ENCODE measurements at regions of chr17 and their contacts with region 1.

Region 1: GRCh38 chr17:50094753-50095619 is at the start of gene PDK2:
- DNase-seq: peak; percentile 97
- ATAC-seq: peak; percentile 93
- H3K4me3 Mint-ChIP-seq: peak within 1 kb of the TSS; percentile 84
- H3K27ac Mint-ChIP-seq: peak within 1 kb of the TSS; percentile 91
- H3K4me1 Mint-ChIP-seq: peaks cover 19% of the 10 kb centered on the region
- H3K27me3 Mint-ChIP-seq: no peaks in the 10 kb centered on the region
- total RNA-seq, gene PDK2: 9.8 to 16.2 TPM

Region 2: GRCh38 chr17:49414622-49415350 is 680.2 kb before region 1 on chr17 and contains the start of gene PHB1:
- CTCF ChIA-PET with region 1: no interaction called
- POLR2A ChIA-PET with region 1: no interaction called
- intact Hi-C with region 1: loop called in 1 of 2 experiments (anchors 1 kb)
- DNase-seq: peak; percentile 98
- ATAC-seq: peak; percentile 100
- H3K4me3 Mint-ChIP-seq: peak within 1 kb of the TSS; percentile 100
- H3K27ac Mint-ChIP-seq: peak within 1 kb of the TSS; percentile 95
- H3K4me1 Mint-ChIP-seq: peaks cover 32% of the 10 kb centered on the region
- H3K27me3 Mint-ChIP-seq: no peaks in the 10 kb centered on the region
- total RNA-seq, gene PHB1: 346 to 350 TPM

Region 3: DNA sequence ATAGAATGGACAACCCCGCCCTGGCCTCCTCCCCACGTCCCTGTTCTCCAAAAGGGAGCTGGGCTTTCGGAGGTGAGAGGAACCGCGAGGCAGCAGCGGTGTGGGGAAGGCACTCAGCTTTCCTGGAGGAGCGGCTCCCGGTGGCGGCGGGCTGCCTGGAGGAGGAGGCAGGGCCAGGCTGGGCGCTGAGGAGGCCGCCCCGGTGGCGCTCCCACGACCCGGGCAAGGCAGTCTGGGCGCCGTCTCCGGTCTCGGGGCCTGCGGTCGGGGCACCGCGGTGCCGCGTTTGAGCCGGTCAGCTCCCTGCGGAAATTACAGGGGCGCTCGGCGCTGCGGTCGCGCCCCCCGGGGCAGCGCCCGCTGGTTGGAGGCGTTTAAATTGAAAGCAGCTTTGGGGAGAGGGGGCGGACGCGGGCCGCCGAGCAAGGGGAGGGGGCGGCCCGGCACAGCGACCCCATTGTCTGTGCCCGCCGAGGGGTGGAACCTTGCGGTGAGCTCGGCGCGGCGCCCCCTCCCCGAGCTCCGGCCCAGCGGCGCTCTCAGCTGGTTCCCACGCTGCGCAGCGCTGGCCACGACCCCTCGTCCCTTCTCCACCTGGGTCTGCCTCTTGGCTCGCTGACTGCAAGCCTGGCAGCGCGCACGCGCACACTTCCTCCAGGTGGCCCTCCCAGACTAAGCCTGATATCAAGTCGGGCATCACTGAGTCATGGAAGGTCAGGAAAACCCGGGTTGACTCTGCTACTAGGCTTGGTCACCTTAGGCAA is 184.7 kb before region 1 on chr17:
- CTCF ChIA-PET with region 1: interaction called, 11 read pairs
- POLR2A ChIA-PET with region 1: no interaction called
- intact Hi-C with region 1: no loop called
- DNase-seq: peak; percentile 59
- ATAC-seq: peak; percentile 79
- H3K4me3 Mint-ChIP-seq: peak overlapping the region; percentile 30
- H3K27ac Mint-ChIP-seq: no peak overlapping the region
- H3K4me1 Mint-ChIP-seq: peaks cover 6% of the 10 kb centered on the region
- H3K27me3 Mint-ChIP-seq: peaks cover 66% of the 10 kb centered on the region

Region 4: GRCh38 chr17:50067996-50068395 is 27.0 kb before region 1 on chr17:
- CTCF ChIA-PET with region 1: interaction called, 11 read pairs
- POLR2A ChIA-PET with region 1: no interaction called
- intact Hi-C with region 1: no loop called
- DNase-seq: no peak
- ATAC-seq: no peak
- H3K4me3 Mint-ChIP-seq: no peak overlapping the region
- H3K27ac Mint-ChIP-seq: no peak overlapping the region
- H3K4me1 Mint-ChIP-seq: no peaks in the 10 kb centered on the region
- H3K27me3 Mint-ChIP-seq: no peaks in the 10 kb centered on the region

Region 5: DNA sequence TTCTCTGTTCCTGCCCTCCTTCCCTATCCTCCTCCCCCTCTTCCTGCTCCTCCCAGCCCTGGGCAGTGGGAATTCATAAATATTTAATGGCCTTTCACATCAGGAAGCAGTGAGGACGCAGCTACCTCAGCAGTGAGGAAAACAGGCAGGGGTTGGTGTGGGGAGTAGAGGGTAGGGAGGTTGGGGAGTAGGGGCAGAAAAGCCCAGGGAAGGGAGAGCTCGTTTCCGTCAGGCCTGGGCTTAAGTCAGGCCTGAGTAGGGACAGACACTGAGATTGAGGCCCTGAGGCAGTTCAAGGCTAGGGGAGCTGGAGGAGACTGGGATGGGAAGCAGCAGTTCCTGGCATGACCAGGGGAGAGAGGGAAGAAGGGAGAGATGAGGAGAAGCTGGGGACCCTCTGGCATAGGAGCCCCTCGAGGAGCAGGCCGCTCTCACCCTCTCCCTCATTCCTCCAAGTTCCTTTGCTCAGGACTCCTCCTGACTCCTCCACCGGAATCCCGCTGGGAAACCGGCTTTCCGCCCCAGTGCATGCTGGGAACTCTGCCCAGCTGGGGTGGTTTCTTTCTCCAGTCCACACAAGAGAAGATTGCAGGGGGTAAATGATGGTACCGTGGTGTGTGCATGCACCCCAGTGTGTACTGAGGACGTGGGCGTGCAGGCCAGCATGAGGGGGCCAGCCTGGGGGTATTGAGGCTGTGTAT is 28.8 kb after region 1 on chr17:
- CTCF ChIA-PET with region 1: interaction called, 15 read pairs
- POLR2A ChIA-PET with region 1: no interaction called
- intact Hi-C with region 1: no loop called
- DNase-seq: no peak
- ATAC-seq: no peak
- H3K4me3 Mint-ChIP-seq: no peak overlapping the region
- H3K27ac Mint-ChIP-seq: no peak overlapping the region
- H3K4me1 Mint-ChIP-seq: peaks cover 4% of the 10 kb centered on the region
- H3K27me3 Mint-ChIP-seq: peaks cover 14% of the 10 kb centered on the region

Region 6: DNA sequence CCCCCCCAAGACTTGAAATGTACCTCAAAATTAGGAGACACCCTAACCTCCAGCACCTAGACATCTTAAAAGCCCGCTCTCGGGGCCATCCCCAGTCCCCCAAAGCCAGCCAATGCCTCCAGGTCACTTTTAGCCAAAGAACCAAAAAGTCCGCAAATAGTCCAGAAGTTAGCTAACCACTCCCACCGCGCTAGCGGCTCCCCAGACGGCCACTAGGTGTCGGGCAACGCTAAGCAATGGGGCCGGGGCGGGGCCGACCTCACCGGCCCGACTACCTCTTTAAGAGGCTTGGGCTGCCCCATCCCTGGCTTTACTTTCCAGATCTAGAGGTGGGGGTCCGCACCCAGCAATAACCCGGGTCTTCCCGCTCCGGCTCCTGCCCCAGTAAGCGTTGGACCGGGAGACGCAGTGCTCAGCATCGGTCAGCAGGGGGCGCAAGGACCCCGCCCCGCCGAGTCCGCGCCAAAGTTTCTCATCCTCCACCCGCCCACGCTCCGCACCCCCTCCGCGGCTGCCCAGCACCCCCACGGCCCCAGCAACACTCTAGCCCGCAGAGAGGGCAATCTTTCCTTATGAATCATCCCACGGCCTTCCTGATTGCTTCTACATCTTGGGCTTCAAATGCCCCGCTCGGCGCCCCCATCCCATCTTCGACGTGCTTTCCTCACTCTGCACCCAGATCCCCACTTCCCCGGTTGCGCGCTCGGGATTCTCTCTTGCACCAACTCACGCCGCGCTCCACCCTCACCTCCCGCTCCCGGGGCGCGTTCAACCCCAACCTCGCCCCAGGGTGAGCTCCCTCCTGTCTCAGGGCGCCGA is 105.7 kb after region 1 on chr17:
- CTCF ChIA-PET with region 1: interaction called, 19 read pairs
- POLR2A ChIA-PET with region 1: no interaction called
- intact Hi-C with region 1: loop called in 1 of 2 experiments (anchors 1 kb)
- DNase-seq: peak; percentile 91
- ATAC-seq: peak; percentile 81
- H3K4me3 Mint-ChIP-seq: peak overlapping the region; percentile 53
- H3K27ac Mint-ChIP-seq: no peak overlapping the region
- H3K4me1 Mint-ChIP-seq: peaks cover 16% of the 10 kb centered on the region
- H3K27me3 Mint-ChIP-seq: peaks cover 43% of the 10 kb centered on the region

Measured in activated CD4-positive, alpha-beta T cell treated with anti-CD3 and anti-CD28 coated beads for 36 hours (primary cell).